Activated naive CD4-positive, alpha-beta T cell treated with anti-CD3 and anti-CD28 coated beads for 36 hours (primary cell): ENCODE measurements at regions of chr13 and their contacts with region 1.

Region 1: GRCh38 chr13:19587635-19588300 is 26.4 kb upstream of the TPTE2 start:
- DNase-seq: peak; percentile 58
- H3K4me3 Mint-ChIP-seq: peak overlapping the region; percentile 75
- H3K27ac Mint-ChIP-seq: peak overlapping the region; percentile 93
- H3K4me1 Mint-ChIP-seq: peaks cover 17% of the 10 kb centered on the region
- H3K27me3 Mint-ChIP-seq: no peaks in the 10 kb centered on the region

Region 2: GRCh38 chr13:19153782-19154450 is 433.9 kb before region 1 on chr13:
- CTCF ChIA-PET with region 1: no interaction called
- intact Hi-C with region 1: loop called (anchors 10 kb)
- DNase-seq: peak; percentile 47
- H3K4me3 Mint-ChIP-seq: no peak overlapping the region
- H3K27ac Mint-ChIP-seq: no peak overlapping the region
- H3K4me1 Mint-ChIP-seq: no peaks in the 10 kb centered on the region
- H3K27me3 Mint-ChIP-seq: no peaks in the 10 kb centered on the region

Region 3: DNA sequence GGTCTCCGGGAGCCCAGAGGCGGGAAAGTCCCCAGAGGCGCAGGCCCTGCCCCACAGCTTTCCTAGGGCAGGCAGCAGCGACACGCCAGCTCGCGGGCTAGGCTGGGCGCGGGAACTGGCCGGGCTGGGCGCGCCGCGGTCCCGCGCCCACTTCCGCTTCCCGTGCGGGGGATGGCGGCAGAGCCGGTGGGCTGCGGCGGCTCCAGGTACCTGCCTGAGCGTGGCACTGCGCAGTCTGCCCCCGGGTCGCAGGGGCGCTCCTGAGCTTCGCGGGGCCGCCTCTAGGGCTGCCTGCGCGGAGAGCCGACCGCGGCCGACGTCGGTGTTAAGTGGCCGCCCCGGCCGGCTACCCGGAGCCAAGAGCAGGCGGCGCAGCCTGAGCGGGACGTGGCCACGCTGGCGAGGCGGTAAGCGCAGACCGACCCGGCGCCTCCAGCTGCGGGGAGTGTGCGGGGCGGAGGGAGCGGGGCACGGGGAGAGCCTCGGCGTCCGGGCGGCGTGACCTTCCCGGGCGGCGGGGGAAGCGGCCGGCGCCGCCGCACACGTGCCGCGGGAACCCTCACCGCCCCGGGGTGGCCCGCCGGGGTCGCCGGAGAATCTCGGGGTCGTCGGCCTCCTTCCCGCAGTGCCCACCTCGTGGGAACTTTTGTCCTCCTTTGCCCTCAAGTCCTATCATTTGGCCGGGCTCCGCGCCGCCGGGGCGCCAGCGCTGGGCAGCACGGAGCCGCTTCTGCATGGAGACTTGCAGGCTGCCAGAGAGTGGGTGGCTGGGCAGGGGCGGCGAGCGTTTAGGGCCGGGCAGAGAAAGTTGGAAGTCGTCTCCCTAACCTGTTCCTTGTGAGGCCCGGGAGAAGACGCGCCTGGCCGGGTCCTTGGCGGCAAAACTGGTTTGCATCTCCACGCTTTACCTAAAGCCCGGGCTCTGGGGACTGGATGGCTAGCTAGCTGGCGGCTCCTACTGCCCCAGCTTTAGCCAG is 14.3 kb after region 1 on chr13:
- CTCF ChIA-PET with region 1: interaction called, 4 read pairs
- intact Hi-C with region 1: loop called (anchors 1 kb)
- DNase-seq: peak; percentile 49
- H3K4me3 Mint-ChIP-seq: peak overlapping the region; percentile 59
- H3K27ac Mint-ChIP-seq: no peak overlapping the region
- H3K4me1 Mint-ChIP-seq: peaks cover 4% of the 10 kb centered on the region
- H3K27me3 Mint-ChIP-seq: peaks cover 42% of the 10 kb centered on the region

Region 4: DNA sequence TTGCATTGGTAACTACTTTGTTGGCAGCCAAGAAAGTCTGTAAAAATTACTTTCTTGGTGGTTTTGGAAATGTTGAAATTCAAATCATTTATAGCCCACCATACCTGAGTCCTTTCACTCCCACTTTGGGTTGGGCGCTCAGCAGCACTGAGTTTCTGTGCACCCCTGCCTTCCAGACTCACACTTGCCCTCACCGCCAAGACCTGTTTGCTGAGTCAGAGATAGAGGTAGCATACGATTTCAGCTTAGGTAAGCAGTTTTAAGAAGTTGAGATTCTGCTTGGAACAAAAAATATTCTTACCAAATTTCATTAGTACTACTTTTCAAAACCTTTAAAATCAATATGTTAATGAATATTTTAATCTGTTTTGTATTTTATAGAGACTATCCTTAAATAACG is 58.3 kb after region 1 on chr13:
- CTCF ChIA-PET with region 1: no interaction called
- intact Hi-C with region 1: no loop called
- DNase-seq: no peak
- H3K4me3 Mint-ChIP-seq: no peak overlapping the region
- H3K27ac Mint-ChIP-seq: no peak overlapping the region
- H3K4me1 Mint-ChIP-seq: peaks cover 20% of the 10 kb centered on the region
- H3K27me3 Mint-ChIP-seq: no peaks in the 10 kb centered on the region

Region 5: DNA sequence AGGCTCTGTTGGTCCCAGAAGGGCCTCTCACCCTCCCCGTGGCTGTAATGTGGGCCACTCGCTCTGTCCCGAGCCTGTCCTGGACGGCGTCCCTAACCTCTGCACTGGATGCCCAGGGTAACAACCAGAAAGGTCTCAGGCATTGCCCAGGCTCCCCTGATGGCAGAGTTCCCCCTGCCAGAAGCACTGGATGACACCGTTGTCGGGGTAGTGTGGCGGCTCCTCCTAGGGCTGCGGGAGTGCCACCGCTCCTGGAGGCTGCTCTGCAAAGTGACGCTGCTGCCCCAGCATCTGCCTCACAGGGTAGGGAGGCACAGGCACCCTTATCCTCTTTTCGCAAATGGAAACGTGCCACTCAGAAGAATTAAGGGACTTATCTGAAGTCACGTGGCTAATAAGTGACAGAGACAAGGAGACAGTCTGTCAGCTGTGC is 77.7 kb after region 1 on chr13:
- CTCF ChIA-PET with region 1: no interaction called
- intact Hi-C with region 1: no loop called
- DNase-seq: no peak
- H3K4me3 Mint-ChIP-seq: no peak overlapping the region
- H3K27ac Mint-ChIP-seq: no peak overlapping the region
- H3K4me1 Mint-ChIP-seq: no peaks in the 10 kb centered on the region
- H3K27me3 Mint-ChIP-seq: no peaks in the 10 kb centered on the region

Region 6: GRCh38 chr13:20359335-20359734 is 771.6 kb after region 1 on chr13:
- CTCF ChIA-PET with region 1: no interaction called
- intact Hi-C with region 1: no loop called
- DNase-seq: no peak
- H3K4me3 Mint-ChIP-seq: no peak overlapping the region
- H3K27ac Mint-ChIP-seq: no peak overlapping the region
- H3K4me1 Mint-ChIP-seq: no peaks in the 10 kb centered on the region
- H3K27me3 Mint-ChIP-seq: no peaks in the 10 kb centered on the region